ENCODE measurements at regions of chr13 and their contacts with region 1.

Region 1: DNA sequence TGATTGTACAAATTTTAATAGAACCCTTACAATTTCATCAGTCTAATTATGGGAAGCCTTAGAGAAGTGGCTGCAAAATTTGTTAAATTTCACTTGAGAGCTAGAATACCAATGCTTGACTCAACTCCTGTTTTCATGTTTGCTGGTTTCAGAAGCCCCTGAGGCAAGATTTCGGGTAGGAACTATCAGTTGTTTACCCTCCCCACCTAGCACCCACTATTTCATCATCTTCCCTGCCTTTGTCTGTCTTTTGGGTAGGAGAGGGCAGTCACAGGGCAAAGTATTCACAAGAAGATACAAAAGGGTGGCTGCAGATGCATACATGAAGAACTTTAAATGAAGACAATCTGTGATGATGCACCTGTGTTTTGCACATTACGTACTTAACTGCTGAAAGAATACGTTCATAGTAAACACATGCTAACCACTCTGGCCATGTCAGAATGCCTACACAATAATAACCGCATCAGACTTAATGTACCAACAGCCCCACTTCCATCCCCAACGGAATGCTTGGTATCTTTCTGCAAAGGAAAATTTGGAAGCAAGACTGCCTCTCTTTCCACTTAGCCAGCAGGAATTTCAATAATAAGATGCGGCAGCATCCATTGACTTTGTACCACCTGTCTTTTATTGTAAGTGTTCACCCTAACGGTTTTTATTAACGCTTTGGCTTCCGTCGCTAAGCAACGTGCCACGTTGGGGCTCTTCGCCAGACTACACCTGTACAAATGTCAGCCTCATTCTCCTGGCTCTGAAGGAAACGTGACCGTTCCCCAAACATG is 30.4 kb downstream of the TPT1 start:
- DNase-seq: no peak
- ATAC-seq: no peak
- H3K4me3 ChIP-seq: peak overlapping the region in 11 of 12 donors; percentile 36 to 69 (median 57)
- H3K27ac ChIP-seq: no peak overlapping the region
- H3K4me1 ChIP-seq: peaks cover 0 to 21% (median 13%) of the 10 kb centered on the region in 12 donors
- H3K27me3 ChIP-seq: peaks cover 0 to 5% (median 0%) of the 10 kb centered on the region in 9 donors
- CTCF ChIP-seq: no peak
- POLR2A ChIP-seq: no peak

Region 2: DNA sequence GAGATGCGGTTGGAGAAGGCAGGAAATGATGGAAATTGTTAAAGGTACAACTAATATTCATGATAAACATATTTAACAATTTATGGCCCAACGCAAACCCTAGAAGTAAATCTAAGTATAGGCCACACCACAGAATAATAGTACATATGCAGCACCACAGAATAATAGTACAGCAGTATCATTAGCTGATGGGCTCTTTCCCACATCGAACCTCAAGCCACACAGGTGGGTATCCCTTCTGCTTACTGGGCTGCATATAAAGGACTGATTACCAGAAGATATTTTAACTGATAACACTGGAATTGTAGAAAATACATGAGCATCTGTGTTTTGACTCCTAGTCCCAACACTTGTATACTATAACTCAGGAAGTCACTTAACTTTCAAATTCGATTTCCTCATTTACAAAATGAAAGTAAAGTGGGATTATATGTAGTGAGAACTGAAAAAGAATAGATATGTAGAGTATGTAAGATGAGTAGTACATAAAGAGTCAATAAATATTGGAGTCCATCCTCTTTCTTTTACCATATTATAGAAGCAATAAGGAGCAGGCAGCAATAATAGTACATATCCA is 825.9 kb before region 1 on chr13:
- intact Hi-C with region 1: loop called in 1 of 10 experiments (anchors 10 kb)
- DNase-seq: no peak
- ATAC-seq: no peak
- H3K4me3 ChIP-seq: peak overlapping the region in 7 of 12 donors; percentile 7 to 24 (median 18)
- H3K27ac ChIP-seq: peak overlapping the region in 2 of 12 donors; percentile 7 to 9
- H3K4me1 ChIP-seq: peaks cover 0 to 20% (median 9%) of the 10 kb centered on the region in 12 donors
- H3K27me3 ChIP-seq: no peaks in the 10 kb centered on the region
- CTCF ChIP-seq: no peak
- POLR2A ChIP-seq: no peak

Region 3: GRCh38 chr13:44969551-44970484 is 340.7 kb before region 1 on chr13:
- intact Hi-C with region 1: loop called in 3 of 10 experiments (anchors 2 to 10 kb)
- DNase-seq: no peak
- ATAC-seq: peak in 3 of 4 donors; percentile 58 to 70 (median 69)
- H3K4me3 ChIP-seq: no peak overlapping the region
- H3K27ac ChIP-seq: peak overlapping the region in 1 of 12 donors; percentile 20
- H3K4me1 ChIP-seq: peaks cover 0 to 24% (median 6%) of the 10 kb centered on the region in 12 donors
- H3K27me3 ChIP-seq: no peaks in the 10 kb centered on the region
- CTCF ChIP-seq: peak; percentile 69 to 92 (median 82)
- POLR2A ChIP-seq: no peak

Region 4: DNA sequence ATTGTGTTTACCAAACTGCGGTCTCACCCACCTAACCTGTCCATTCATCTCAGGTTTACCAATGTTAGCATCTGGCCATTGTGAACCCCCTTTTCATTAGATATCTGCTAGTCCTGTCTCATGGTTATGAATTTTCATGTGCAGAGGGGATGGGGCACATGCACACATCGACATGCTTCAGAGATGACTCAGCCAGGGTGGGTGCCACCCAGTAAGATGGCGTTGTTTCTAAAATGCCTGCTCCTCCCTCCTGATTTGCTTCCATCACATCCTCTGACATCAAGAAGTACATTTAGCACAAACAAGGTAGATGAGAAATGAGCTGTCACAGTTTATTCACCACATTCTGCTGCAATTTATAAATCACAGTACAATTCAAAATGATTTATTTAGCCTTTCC is 269.9 kb before region 1 on chr13:
- intact Hi-C with region 1: loop called in 1 of 10 experiments (anchors 5 kb)
- DNase-seq: no peak
- ATAC-seq: no peak
- H3K4me3 ChIP-seq: no peak overlapping the region
- H3K27ac ChIP-seq: no peak overlapping the region
- H3K4me1 ChIP-seq: peaks cover 0 to 9% (median 0%) of the 10 kb centered on the region in 12 donors
- H3K27me3 ChIP-seq: no peaks in the 10 kb centered on the region
- CTCF ChIP-seq: no peak
- POLR2A ChIP-seq: no peak

Region 5: DNA sequence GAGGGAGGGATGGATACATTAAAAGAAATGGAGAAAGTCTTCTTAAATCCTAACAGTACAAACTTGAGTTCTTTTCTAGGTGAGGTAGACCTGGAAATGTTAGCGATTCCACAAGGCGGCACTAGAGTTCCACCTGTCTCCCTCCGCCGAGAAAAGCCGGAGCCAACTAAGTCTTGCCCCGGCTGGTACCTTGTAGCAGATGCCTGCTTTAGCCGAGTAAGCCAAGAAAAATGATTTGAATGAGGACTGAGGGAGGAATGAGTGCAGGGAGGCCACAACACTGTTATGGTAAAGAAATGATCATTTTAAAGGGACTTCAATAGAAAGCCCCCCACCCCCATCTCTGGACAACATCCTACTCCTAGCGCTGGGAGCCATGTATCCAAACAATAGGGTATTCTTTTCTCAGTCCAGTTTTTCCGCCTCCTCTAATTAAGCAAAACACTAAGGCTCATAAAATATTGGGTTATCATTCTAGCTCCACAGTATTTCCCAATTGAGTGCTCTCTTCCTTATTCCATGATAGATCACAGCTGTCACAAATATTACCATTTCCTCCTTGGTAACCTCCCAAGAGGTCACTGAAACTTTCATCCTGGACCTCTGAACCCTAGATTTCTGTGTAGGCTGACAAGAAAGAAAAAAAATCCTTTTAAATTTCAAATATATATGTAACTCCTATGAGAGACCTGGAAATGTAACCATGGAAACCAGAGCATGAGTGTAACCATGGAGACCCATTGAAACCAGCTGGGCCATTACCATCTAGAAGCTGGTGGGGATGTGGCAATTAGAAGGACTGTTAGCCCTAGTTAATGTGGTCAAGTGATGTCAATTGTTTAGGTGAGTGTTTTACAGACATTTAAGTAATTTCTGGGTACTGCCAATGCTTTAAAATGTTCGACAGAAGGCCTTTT is 262.9 kb before region 1 on chr13:
- intact Hi-C with region 1: loop called (anchors 1 to 5 kb)
- DNase-seq: peak; percentile 63 to 73 (median 67)
- ATAC-seq: peak; percentile 73 to 87 (median 80)
- H3K4me3 ChIP-seq: peak overlapping the region in 11 of 12 donors; percentile 22 to 59 (median 50)
- H3K27ac ChIP-seq: peak overlapping the region in 5 of 12 donors; percentile 38 to 66 (median 49)
- H3K4me1 ChIP-seq: peaks cover 0 to 16% (median 3%) of the 10 kb centered on the region in 12 donors
- H3K27me3 ChIP-seq: no peaks in the 10 kb centered on the region
- CTCF ChIP-seq: peak; percentile 75 to 91 (median 85)
- POLR2A ChIP-seq: no peak